ENCODE measurements at regions of chr9 and their contacts with region 1.

Region 1: DNA sequence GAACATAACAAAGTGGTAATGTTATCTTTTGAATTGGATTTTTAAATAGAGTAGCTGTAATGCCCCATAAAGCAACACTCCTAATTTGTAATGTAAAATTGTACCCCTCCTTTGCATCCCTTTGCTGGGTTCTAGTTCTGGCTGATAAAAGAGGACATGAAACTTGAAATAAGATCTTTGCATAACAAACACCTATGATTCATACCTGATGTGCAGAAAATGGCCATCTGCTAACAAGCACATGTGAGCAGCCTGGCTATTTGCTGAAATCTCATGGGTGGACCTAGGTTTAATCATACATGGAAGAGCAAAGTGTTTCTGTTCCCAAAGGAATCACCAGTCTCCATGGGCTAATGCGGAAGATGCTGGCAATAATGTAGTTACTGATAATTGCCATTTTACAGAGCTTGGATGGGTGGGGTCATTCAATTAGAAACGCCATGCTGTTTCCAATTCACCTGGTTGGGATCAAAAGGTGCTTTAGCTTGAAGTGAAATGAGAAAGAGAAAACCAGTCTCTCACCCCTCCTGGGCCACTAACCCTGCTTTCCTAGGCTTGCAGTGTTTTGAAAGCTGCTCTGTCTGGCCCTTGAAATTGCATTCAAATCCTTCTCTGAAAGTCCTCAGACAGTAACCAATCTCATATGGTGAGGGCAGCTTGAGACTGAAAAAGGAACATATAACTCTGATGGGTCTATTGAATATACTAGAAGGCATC is 585.1 kb downstream of the TLE4 start:
- DNase-seq: no peak
- H3K4me3 ChIP-seq: no peak overlapping the region
- H3K27ac ChIP-seq: no peak overlapping the region
- H3K4me1 ChIP-seq: no peaks in the 10 kb centered on the region
- H3K27me3 ChIP-seq: no peaks in the 10 kb centered on the region
- CTCF ChIP-seq: no peak
- POLR2A ChIP-seq: no peak

Region 2: GRCh38 chr9:79571309-79572031 is 585.4 kb before region 1 on chr9 and contains the start of gene TLE4:
- intact Hi-C with region 1: loop called (anchors 5 kb)
- DNase-seq: peak; percentile 100
- H3K4me3 ChIP-seq: peak within 1 kb of the TSS; percentile 75 to 82
- H3K27ac ChIP-seq: peak within 1 kb of the TSS; percentile 85 to 87
- H3K4me1 ChIP-seq: no peaks in the 10 kb centered on the region
- H3K27me3 ChIP-seq: no peaks in the 10 kb centered on the region
- CTCF ChIP-seq: no peak
- POLR2A ChIP-seq: peak; percentile 96
- total RNA-seq, gene TLE4: 9.7 to 130 TPM

Region 3: GRCh38 chr9:80382211-80382891 is 225.4 kb after region 1 on chr9:
- intact Hi-C with region 1: no loop called
- DNase-seq: no peak
- H3K4me3 ChIP-seq: no peak overlapping the region
- H3K27ac ChIP-seq: no peak overlapping the region
- H3K4me1 ChIP-seq: no peaks in the 10 kb centered on the region
- H3K27me3 ChIP-seq: no peaks in the 10 kb centered on the region
- CTCF ChIP-seq: no peak
- POLR2A ChIP-seq: no peak

Region 4: GRCh38 chr9:81492710-81493447 is 1336.0 kb after region 1 on chr9:
- intact Hi-C with region 1: loop called (anchors 10 kb)
- DNase-seq: no peak
- H3K4me3 ChIP-seq: no peak overlapping the region
- H3K27ac ChIP-seq: no peak overlapping the region
- H3K4me1 ChIP-seq: no peaks in the 10 kb centered on the region
- H3K27me3 ChIP-seq: no peaks in the 10 kb centered on the region
- CTCF ChIP-seq: no peak
- POLR2A ChIP-seq: no peak